SK-N-SH (cell line): ENCODE measurements at regions of chr1 and their contacts with region 1.

Region 1: GRCh38 chr1:211648980-211649934 is 26.2 kb downstream of the NEK2 start:
- DNase-seq: peak; percentile 80
- H3K4me3 ChIP-seq: no peak overlapping the region
- H3K27ac ChIP-seq: no peak overlapping the region
- H3K4me1 ChIP-seq: peaks cover 0 to 2% of the 10 kb centered on the region in 2 experiments; a peak in 2 of 4 replicates
- H3K27me3 ChIP-seq: no peaks in the 10 kb centered on the region
- CTCF ChIP-seq: peak; percentile 73
- EP300 ChIP-seq: no peak
- RAD21 ChIP-seq: peak; percentile 73

Region 2: DNA sequence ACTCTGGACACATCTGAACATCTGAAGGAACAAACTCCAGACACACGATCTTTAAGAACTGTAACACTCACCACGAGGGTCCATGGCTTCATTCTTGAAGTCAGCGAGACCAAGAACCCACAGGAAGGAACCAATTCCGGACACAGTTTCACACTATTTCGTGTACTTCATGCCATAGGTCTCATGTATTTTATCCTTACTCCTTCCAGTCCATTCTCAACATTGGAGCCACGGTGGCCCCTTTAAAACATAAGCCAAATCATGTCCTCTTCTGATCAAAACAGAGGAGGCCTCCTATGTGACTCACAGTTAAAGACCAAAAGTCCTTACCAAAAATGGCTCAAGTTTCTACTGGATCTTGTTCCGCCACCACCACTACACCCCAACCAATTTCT is 419.9 kb before region 1 on chr1:
- CTCF ChIA-PET with region 1: no interaction called
- POLR2A ChIA-PET with region 1: no interaction called
- DNase-seq: no peak
- H3K4me3 ChIP-seq: no peak overlapping the region
- H3K27ac ChIP-seq: no peak overlapping the region
- H3K4me1 ChIP-seq: no peaks in the 10 kb centered on the region
- H3K27me3 ChIP-seq: no peaks in the 10 kb centered on the region
- CTCF ChIP-seq: no peak
- EP300 ChIP-seq: no peak
- RAD21 ChIP-seq: no peak

Region 3: DNA sequence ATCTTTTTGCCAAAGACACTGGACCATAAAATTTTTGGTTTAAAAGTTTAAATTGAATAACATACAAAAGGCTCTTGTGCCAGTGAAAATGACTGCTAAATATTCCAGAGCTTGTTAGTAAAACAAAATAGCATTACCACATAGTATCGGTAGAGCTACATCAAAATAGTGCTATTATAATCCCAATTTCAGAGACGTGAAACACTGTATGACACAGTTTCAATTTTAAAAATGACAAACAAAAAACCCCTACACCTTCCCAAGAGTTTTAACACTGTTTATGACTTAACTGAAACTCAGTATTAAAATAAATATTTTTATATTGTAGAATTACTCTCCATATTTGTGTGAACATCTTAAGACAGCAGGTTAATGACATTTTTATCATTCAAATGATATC is 77.3 kb before region 1 on chr1:
- CTCF ChIA-PET with region 1: interaction called, 18 read pairs
- POLR2A ChIA-PET with region 1: no interaction called
- DNase-seq: no peak
- H3K4me3 ChIP-seq: no peak overlapping the region
- H3K27ac ChIP-seq: no peak overlapping the region
- H3K4me1 ChIP-seq: peaks cover 16 to 18% of the 10 kb centered on the region in 2 experiments; a peak in 3 of 4 replicates
- H3K27me3 ChIP-seq: no peaks in the 10 kb centered on the region
- CTCF ChIP-seq: no peak
- EP300 ChIP-seq: no peak
- RAD21 ChIP-seq: no peak

Region 4: GRCh38 chr1:211578640-211579433 is 70.4 kb before region 1 on chr1 and contains the start of gene SLC30A1:
- CTCF ChIA-PET with region 1: interaction called, 31 read pairs
- POLR2A ChIA-PET with region 1: no interaction called
- DNase-seq: peak; percentile 100
- H3K4me3 ChIP-seq: peak within 1 kb of the TSS; percentile 89 to 98
- H3K27ac ChIP-seq: peak within 1 kb of the TSS; percentile 78 to 95
- H3K4me1 ChIP-seq: peaks cover 25 to 29% of the 10 kb centered on the region in 2 experiments; a peak in 3 of 4 replicates
- H3K27me3 ChIP-seq: no peaks in the 10 kb centered on the region
- CTCF ChIP-seq: no peak
- EP300 ChIP-seq: peak in 1 of 2 experiments; percentile 40; a peak in 2 of 4 replicates
- RAD21 ChIP-seq: no peak
- polyA plus RNA-seq, gene SLC30A1: 6.9 and 7.2 TPM in 2 replicates

Region 5: GRCh38 chr1:211632631-211633523 is 16.4 kb before region 1 on chr1:
- CTCF ChIA-PET with region 1: interaction called, 21 read pairs
- POLR2A ChIA-PET with region 1: no interaction called
- DNase-seq: no peak
- H3K4me3 ChIP-seq: no peak overlapping the region
- H3K27ac ChIP-seq: peak overlapping the region in 1 of 2 experiments; percentile 63; a peak in 3 of 4 replicates
- H3K4me1 ChIP-seq: peaks cover 15 to 19% of the 10 kb centered on the region in 2 experiments; a peak in 3 of 4 replicates
- H3K27me3 ChIP-seq: no peaks in the 10 kb centered on the region
- CTCF ChIP-seq: no peak
- EP300 ChIP-seq: no peak
- RAD21 ChIP-seq: no peak